ENCODE measurements at regions of chr7 and their contacts with region 1.

Region 1: DNA sequence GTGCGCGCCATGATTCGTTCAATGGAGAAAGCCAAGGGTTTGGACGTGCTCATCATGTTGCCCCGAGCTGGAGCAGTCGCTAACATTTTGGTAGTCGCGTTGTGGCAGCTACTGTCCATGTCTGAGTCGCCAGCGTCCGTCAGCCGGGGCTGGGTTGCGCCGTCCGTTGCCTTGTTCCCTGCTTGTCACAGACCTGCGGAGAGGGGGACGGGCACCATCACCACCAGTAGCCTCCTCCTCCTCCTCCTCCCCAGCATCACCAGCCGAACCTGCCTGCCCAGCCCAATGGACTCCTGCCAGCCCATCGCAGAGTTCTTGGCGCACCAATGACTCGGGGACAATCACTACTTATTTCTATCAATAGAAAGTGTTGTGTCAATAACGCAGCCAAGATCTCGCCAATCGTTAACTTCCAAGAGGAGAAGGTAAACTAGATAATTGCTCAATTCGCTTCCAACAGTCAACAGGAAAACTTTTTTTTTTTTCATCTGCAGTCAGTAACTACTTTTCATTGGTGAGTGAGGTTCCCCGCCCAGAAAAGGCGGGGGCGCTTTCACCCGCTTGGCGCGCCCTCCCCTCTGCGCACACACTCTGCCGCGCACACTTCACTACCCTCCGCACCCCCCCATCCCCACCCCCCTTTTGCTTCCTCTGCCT is at the start of gene FEZF1:
- DNase-seq: peak; percentile 97
- H3K4me3 ChIP-seq: peak within 1 kb of the TSS; percentile 84
- H3K27ac ChIP-seq: peak within 1 kb of the TSS; percentile 100
- H3K4me1 ChIP-seq: peaks cover 15% of the 10 kb centered on the region
- H3K27me3 ChIP-seq: no peaks in the 10 kb centered on the region
- CTCF ChIP-seq: no peak
- total RNA-seq, gene FEZF1: 85.9 and 114 TPM in 2 replicates

Region 2: DNA sequence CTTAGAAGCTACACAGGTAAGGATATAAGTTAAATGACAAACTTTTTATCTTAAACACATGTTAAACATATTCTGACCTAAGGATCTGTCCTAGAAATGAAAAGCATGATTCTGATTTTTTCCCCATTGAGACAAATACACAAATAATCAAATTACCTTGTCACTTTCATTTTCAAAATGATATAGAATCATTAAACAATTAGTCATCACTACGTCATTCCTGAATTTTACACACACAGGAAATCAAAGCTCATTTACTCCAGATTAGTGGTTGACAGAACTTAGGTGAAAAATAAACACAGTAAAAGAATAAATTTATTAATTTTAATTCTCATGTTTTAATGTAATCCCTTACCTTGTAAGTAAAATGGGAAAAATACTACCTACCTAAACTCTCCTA is 249.4 kb before region 1 on chr7:
- CTCF ChIA-PET with region 1: no interaction called
- POLR2A ChIA-PET with region 1: no interaction called
- intact Hi-C with region 1: no loop called
- DNase-seq: peak; percentile 12
- H3K4me3 ChIP-seq: no peak overlapping the region
- H3K27ac ChIP-seq: no peak overlapping the region
- H3K4me1 ChIP-seq: no peaks in the 10 kb centered on the region
- H3K27me3 ChIP-seq: no peaks in the 10 kb centered on the region
- CTCF ChIP-seq: no peak

Region 3: DNA sequence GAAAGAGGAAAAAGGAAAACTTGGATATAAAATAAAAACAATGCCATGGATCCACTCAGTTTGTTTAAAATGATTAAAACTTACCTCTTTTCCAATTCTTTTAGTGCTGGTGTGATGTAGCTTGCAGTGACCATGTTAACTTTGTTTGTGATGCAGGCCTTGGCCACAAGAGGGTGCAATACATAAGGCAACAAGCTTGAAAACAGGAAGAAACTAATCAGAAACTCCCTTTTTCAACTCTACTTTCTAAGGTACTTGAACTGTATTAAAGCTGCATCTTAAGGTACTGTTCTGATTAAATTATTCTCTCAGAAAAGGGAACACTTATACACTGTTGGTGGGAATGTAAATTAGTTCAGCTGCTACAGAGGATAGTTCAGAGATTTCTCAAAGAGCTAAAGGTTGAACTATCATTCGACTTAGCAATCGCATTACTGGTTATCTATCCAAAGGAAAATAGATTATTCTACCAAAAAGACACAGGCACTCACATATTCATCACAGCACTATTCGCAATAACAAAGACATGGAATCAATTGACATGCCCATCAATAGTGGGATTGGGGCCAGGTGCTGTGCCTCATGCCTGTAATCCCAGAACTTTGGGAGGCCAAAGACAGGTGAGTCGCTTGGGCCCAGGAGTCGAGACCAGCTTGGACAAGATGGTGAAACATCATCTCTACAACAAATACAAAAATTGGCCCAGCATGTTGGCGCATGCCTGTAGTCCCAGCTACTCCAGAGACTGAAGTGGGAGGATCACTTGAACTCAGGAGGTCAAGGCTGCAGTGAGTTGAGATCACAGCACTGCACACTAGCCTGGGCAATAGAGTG is 211.3 kb before region 1 on chr7:
- CTCF ChIA-PET with region 1: no interaction called
- POLR2A ChIA-PET with region 1: no interaction called
- intact Hi-C with region 1: loop called (anchors 2 kb)
- DNase-seq: peak; percentile 82
- H3K4me3 ChIP-seq: no peak overlapping the region
- H3K27ac ChIP-seq: no peak overlapping the region
- H3K4me1 ChIP-seq: no peaks in the 10 kb centered on the region
- H3K27me3 ChIP-seq: no peaks in the 10 kb centered on the region
- CTCF ChIP-seq: peak; percentile 93

Region 4: DNA sequence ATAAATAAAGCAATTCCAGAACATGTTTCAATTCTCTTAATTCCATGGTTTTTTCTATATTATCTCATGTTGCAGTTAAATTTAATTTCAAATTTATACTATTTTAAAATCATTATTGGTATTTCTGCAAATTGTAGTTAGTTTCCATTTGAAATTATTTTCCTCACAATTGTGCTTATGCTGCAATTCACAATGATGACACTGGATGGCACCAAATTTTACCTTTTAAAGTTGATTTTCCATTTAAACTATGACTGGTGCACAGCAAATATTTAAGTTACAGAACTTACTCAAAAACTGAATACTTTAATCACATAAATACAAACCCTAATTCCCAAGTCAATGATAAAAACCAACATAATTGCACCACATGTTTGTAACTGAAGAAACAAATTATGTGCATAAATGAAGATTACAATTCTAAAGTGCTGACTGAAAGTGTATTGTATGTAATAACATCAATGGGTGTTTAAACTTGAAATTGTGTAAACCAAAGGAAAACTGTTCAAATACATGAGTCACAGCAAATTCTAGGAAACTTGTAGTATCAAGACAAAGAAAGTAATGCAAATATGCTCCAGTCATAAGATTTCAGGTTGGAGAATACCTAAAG is 85.1 kb before region 1 on chr7:
- CTCF ChIA-PET with region 1: no interaction called
- POLR2A ChIA-PET with region 1: no interaction called
- intact Hi-C with region 1: loop called (anchors 5 kb)
- DNase-seq: peak; percentile 62
- H3K4me3 ChIP-seq: no peak overlapping the region
- H3K27ac ChIP-seq: no peak overlapping the region
- H3K4me1 ChIP-seq: peaks cover 8% of the 10 kb centered on the region
- H3K27me3 ChIP-seq: no peaks in the 10 kb centered on the region
- CTCF ChIP-seq: peak; percentile 86

Region 5: GRCh38 chr7:122329145-122329802 is 24.8 kb after region 1 on chr7:
- CTCF ChIA-PET with region 1: no interaction called
- POLR2A ChIA-PET with region 1: no interaction called
- intact Hi-C with region 1: no loop called
- DNase-seq: no peak
- H3K4me3 ChIP-seq: no peak overlapping the region
- H3K27ac ChIP-seq: no peak overlapping the region
- H3K4me1 ChIP-seq: no peaks in the 10 kb centered on the region
- H3K27me3 ChIP-seq: no peaks in the 10 kb centered on the region
- CTCF ChIP-seq: no peak

Region 6: GRCh38 chr7:122442929-122443328 is 138.5 kb after region 1 on chr7:
- CTCF ChIA-PET with region 1: no interaction called
- POLR2A ChIA-PET with region 1: no interaction called
- intact Hi-C with region 1: loop called (anchors 5 kb)
- DNase-seq: peak; percentile 37
- H3K4me3 ChIP-seq: no peak overlapping the region
- H3K27ac ChIP-seq: no peak overlapping the region
- H3K4me1 ChIP-seq: peaks cover 22% of the 10 kb centered on the region
- H3K27me3 ChIP-seq: peaks cover 25% of the 10 kb centered on the region
- CTCF ChIP-seq: no peak

Region 7: DNA sequence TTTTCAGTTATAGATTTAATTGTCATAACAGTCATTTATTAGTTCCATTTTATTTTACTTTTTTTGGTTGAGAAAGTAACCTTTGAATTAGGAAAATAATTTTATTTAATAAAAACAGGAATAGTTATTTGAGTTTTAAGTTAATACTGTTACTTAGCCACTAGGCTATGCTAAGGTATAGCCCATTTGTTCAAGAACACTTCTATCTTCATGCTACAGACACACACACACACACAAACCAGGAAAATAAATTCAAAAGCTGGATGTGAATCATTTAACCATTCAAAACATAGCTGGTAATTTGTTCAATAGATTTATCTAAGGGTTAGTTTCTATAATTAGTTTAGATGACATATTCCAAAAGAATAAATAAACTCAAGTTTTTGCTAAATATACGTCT is 246.1 kb after region 1 on chr7:
- CTCF ChIA-PET with region 1: no interaction called
- POLR2A ChIA-PET with region 1: no interaction called
- intact Hi-C with region 1: no loop called
- DNase-seq: no peak
- H3K4me3 ChIP-seq: no peak overlapping the region
- H3K27ac ChIP-seq: no peak overlapping the region
- H3K4me1 ChIP-seq: no peaks in the 10 kb centered on the region
- H3K27me3 ChIP-seq: no peaks in the 10 kb centered on the region
- CTCF ChIP-seq: peak; percentile 37; the same call in 1 of the 2 replicates

Region 8: DNA sequence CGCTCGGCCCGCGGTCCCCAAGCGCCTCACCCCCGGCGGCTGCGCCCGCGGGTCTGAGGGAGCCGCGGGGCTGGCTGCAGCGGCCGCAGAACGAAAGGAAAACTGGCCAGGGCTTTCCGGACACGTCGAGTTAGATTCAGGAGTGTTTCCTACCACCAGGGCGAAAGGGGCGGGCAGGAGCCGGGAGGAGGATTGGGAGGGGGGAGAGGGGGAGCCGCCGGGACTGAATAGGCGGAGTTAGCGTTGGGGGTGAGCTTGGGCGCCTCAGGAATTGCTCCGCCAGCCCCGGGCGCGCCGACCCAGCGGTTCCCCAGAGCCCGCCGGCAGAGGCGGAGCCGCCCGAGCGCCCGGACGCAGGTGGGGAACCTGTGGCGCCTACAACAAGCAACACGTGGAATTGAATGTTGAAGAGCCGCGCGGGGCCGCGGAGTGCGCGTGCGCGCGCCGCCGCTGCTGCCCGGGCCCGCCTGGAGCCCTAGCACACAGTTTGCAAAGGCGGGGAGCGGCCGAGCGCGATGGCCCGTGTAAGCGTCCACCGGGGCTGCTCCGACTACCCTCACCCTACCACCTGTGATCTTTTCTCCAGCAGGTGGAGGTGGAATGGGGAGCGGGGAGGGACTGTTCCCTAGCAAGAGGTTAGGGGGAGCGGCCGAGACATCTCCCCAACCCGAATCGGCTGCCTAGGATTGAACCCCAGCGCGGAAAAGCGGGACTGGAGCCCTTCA is 582.1 kb after region 1 on chr7 and contains the start of gene CADPS2:
- CTCF ChIA-PET with region 1: no interaction called
- POLR2A ChIA-PET with region 1: no interaction called
- intact Hi-C with region 1: loop called (anchors 5 kb)
- DNase-seq: peak; percentile 96
- H3K4me3 ChIP-seq: peak within 1 kb of the TSS; percentile 91
- H3K27ac ChIP-seq: peak within 1 kb of the TSS; percentile 93
- H3K4me1 ChIP-seq: peaks cover 22% of the 10 kb centered on the region
- H3K27me3 ChIP-seq: no peaks in the 10 kb centered on the region
- CTCF ChIP-seq: no peak; the same call in 1 of the 2 replicates
- total RNA-seq, gene CADPS2: 74.4 and 81.3 TPM in 2 replicates

Region 9: GRCh38 chr7:123041101-123041500 is 736.7 kb after region 1 on chr7:
- CTCF ChIA-PET with region 1: no interaction called
- POLR2A ChIA-PET with region 1: no interaction called
- intact Hi-C with region 1: loop called (anchors 5 kb)
- DNase-seq: no peak
- H3K4me3 ChIP-seq: no peak overlapping the region
- H3K27ac ChIP-seq: no peak overlapping the region
- H3K4me1 ChIP-seq: peaks cover 17% of the 10 kb centered on the region
- H3K27me3 ChIP-seq: no peaks in the 10 kb centered on the region
- CTCF ChIP-seq: no peak

Region 10: DNA sequence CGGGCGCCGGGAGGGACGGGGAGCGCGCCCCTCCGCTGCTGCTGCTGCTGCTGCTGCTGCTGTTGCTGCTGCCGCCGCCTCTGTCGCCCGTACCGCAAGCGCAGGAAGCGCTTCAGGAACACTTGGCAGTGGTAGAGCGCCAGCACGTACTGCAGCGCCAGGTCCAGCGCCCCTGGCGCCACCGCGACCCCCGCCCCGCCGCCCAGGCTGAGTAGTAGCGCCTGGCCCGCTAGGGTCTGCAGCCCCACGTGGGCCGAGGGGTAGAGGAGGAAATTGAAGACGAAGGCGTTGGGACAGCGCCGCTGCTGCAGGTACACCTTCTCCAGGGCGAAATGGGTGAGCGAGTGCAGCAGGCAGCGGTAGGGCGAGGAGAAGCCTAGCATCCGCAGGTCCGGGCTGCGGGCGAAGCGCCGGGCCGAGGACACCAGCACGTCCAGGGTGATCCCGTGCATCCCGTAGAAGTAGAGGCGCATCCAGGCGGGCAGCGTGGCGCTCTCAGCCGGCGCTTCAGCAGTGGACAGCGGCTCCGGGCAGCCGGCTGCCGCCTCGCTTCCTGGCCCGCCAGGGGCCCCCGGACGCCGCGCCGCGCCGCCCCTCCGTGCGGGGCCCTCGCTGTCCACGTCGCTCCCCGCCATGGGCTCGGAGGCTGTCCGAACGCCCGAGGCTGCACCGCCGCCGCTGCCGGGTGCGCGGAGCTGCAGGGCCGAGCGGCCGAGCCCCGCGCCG is 1728.1 kb after region 1 on chr7 and contains the start of gene TMEM229A:
- CTCF ChIA-PET with region 1: no interaction called
- POLR2A ChIA-PET with region 1: no interaction called
- intact Hi-C with region 1: loop called (anchors 5 kb)
- DNase-seq: peak; percentile 78
- H3K4me3 ChIP-seq: peak within 1 kb of the TSS; percentile 77
- H3K27ac ChIP-seq: peak within 1 kb of the TSS; percentile 98
- H3K4me1 ChIP-seq: peaks cover 54% of the 10 kb centered on the region
- H3K27me3 ChIP-seq: no peaks in the 10 kb centered on the region
- CTCF ChIP-seq: 0 out of 2 replicates have a peak, but pooled peaks have one; percentile 25
- total RNA-seq, gene TMEM229A: 22.2 and 24.6 TPM in 2 replicates